ENCODE measurements at regions of chr5 and their contacts with region 1.

Region 1: GRCh38 chr5:42423285-42424165 is at the start of gene GHR:
- DNase-seq: peak; percentile 93
- H3K4me3 ChIP-seq: peak within 1 kb of the TSS; percentile 58 to 70 (median 66)
- H3K27ac ChIP-seq: peak within 1 kb of the TSS; percentile 86 to 91 (median 90)
- H3K4me1 ChIP-seq: peaks cover 0 to 35% (median 29%) of the 10 kb centered on the region in 4 donors
- H3K27me3 ChIP-seq: no peaks in the 10 kb centered on the region
- CTCF ChIP-seq: peak; percentile 72 to 88 (median 80)
- EP300 ChIP-seq: no peak
- POLR2A ChIP-seq: no peak
- total RNA-seq, gene GHR: 9.1 to 22.8 (median 12.7) TPM

Region 2: DNA sequence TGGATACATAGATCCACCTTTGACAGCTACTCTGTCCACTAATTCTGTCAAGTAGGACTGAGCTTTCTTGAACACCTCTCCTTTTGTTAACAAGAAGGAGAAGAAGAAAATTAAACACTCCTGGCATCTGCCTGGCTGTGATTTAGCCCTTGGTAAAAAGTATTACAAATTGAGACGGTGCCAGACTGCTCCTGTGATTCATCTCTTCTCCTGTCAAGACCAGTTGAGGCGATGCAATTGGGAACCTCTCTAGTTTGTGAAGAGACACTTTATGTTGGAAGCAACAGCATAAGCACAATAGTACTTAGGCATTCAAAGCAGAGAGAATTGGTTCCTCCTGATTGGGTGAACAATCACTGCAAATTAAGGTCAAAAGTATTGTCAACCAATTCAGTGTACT is 72.4 kb after region 1 on chr5:
- intact Hi-C with region 1: loop called (anchors 10 kb)
- DNase-seq: no peak
- H3K4me3 ChIP-seq: no peak overlapping the region
- H3K27ac ChIP-seq: peak overlapping the region in 3 of 4 donors; percentile 11 to 22 (median 19)
- H3K4me1 ChIP-seq: peaks cover 0 to 72% (median 49%) of the 10 kb centered on the region in 4 donors
- H3K27me3 ChIP-seq: no peaks in the 10 kb centered on the region
- CTCF ChIP-seq: no peak
- EP300 ChIP-seq: no peak
- POLR2A ChIP-seq: no peak

Region 3: GRCh38 chr5:42583322-42583721 is 159.8 kb after region 1 on chr5:
- intact Hi-C with region 1: loop called (anchors 1 kb)
- DNase-seq: peak; percentile 86
- H3K4me3 ChIP-seq: no peak overlapping the region
- H3K27ac ChIP-seq: no peak overlapping the region
- H3K4me1 ChIP-seq: peaks cover 0 to 35% (median 22%) of the 10 kb centered on the region in 4 donors
- H3K27me3 ChIP-seq: no peaks in the 10 kb centered on the region
- CTCF ChIP-seq: peak; percentile 17 to 82 (median 74)
- EP300 ChIP-seq: no peak
- POLR2A ChIP-seq: no peak

Region 4: DNA sequence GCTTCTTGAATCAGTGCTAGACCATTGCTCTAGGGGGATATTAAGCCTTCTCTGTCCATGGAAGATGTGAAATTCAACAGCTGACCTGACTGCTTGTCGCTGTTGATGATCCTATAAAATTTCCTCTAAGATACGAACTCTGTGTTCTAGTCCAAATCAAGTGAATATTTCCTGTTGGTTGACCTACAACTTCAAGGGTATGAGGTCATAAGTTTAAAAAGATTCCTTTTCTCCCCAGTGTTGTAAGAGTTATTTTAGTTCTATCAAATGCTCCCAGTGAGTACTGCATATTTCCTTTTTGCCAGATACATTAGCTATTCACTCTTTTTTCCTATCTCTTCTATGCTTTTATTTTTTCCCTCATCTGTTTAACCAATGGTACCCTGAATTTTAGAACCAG is 230.2 kb after region 1 on chr5:
- intact Hi-C with region 1: loop called (anchors 5 kb)
- DNase-seq: no peak
- H3K4me3 ChIP-seq: no peak overlapping the region
- H3K27ac ChIP-seq: no peak overlapping the region
- H3K4me1 ChIP-seq: peaks cover 0 to 27% (median 2%) of the 10 kb centered on the region in 4 donors
- H3K27me3 ChIP-seq: no peaks in the 10 kb centered on the region
- CTCF ChIP-seq: no peak
- EP300 ChIP-seq: no peak
- POLR2A ChIP-seq: no peak

Region 5: DNA sequence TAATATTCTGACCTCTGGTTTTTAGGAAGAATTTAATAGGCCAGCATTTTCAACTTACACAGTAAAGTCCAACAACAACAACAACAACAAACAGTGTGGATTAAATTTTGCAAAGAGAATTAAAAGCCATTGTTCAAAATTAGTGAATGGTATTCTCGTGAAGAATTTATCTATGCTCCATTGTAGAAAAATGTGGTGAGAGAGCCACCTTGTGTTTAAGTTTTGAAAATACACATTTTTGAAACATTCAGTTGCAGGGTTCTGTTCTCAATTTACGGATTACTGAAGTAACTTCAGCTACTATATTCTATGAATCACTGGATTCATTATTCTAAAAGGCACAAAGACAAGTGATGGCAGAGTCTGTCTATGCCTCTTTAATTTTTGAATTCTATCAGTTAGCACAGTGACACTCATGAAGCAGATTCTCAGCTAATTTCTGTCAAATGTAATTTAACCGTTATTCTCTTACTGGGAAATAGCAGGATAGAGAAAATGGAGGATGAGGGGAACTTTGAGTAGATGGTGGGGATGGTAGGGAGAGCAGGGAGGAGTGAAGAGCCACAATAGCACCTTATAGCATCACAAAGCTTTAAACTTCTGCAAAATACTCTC is 344.1 kb after region 1 on chr5:
- intact Hi-C with region 1: loop called (anchors 1 kb)
- DNase-seq: no peak
- H3K4me3 ChIP-seq: no peak overlapping the region
- H3K27ac ChIP-seq: no peak overlapping the region
- H3K4me1 ChIP-seq: no peaks in the 10 kb centered on the region
- H3K27me3 ChIP-seq: no peaks in the 10 kb centered on the region
- CTCF ChIP-seq: peak in 2 of 4 experiments; percentile 16 to 49
- EP300 ChIP-seq: no peak
- POLR2A ChIP-seq: no peak

Measured in sigmoid colon (tissue), 7 donors.